ENCODE measurements at regions of chr14 and their contacts with region 1.

Region 1: GRCh38 chr14:30214461-30215090 is 286.9 kb upstream of the PRKD1 start:
- DNase-seq: peak in 5 of 7 donors; percentile 16 to 44 (median 27)
- H3K4me3 ChIP-seq: no peak overlapping the region
- H3K27ac ChIP-seq: no peak overlapping the region
- H3K4me1 ChIP-seq: no peaks in the 10 kb centered on the region
- H3K27me3 ChIP-seq: no peaks in the 10 kb centered on the region
- CTCF ChIP-seq: peak; percentile 11 to 74 (median 65)
- POLR2A ChIP-seq: no peak

Region 2: DNA sequence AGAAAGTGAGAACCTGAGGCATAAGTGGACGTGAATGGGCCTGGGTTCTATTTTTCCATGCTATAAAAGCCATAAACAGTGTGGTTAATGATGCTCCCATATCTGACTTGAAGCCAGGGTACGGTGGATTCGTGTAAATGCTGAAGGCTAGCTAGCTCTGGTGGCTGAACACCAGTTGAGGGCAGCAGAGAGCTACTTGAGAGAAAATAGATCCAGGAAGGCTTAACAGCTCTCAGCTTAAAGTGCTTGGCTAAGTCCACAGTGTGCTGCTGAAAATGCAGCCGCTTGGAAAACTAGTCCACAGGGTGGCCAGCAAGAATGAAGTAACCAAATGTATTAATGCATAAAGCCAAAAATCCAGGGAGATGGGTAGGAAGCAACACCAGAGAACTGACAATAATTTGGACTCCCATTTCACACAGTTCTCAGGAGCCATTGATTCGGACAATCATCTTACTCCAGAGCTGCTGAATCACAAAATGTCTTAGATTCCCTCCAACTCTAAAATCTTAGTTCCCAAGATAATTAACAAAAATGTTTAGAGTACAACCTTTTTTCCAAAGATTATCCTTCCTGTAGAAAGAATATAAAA is 1463.0 kb before region 1 on chr14:
- intact Hi-C with region 1: loop called in 1 of 2 experiments (anchors 10 kb)
- DNase-seq: peak in 6 of 7 donors; percentile 27 to 54 (median 39)
- H3K4me3 ChIP-seq: no peak overlapping the region
- H3K27ac ChIP-seq: no peak overlapping the region
- H3K4me1 ChIP-seq: no peaks in the 10 kb centered on the region
- H3K27me3 ChIP-seq: peaks cover 29% of the 10 kb centered on the region
- CTCF ChIP-seq: peak in 5 of 6 experiments; percentile 20 to 48 (median 27)
- POLR2A ChIP-seq: no peak

Measured in adrenal gland (tissue), 19 donors.